Panc1 (cell line): ENCODE measurements at regions of chr5 and their contacts with region 1.

Region 1: GRCh38 chr5:142548739-142549275 is 137.1 kb downstream of the FGF1 start:
- DNase-seq: peak; percentile 97
- ATAC-seq: peak; percentile 99
- H3K4me3 ChIP-seq: no peak overlapping the region
- H3K27ac ChIP-seq: peak overlapping the region; percentile 60
- H3K4me1 ChIP-seq: peaks cover 5% of the 10 kb centered on the region
- H3K27me3 ChIP-seq: no peaks in the 10 kb centered on the region
- CTCF ChIP-seq: peak; percentile 97

Region 2: GRCh38 chr5:142128675-142129208 is 420.1 kb before region 1 on chr5:
- CTCF ChIA-PET with region 1: no interaction called
- POLR2A ChIA-PET with region 1: no interaction called
- in situ Hi-C with region 1: no loop called
- intact Hi-C with region 1: no loop called
- DNase-seq: no peak
- ATAC-seq: no peak
- H3K4me3 ChIP-seq: no peak overlapping the region
- H3K27ac ChIP-seq: no peak overlapping the region
- H3K4me1 ChIP-seq: no peaks in the 10 kb centered on the region
- H3K27me3 ChIP-seq: no peaks in the 10 kb centered on the region
- CTCF ChIP-seq: no peak

Region 3: GRCh38 chr5:142151436-142152383 is 397.1 kb before region 1 on chr5:
- CTCF ChIA-PET with region 1: interaction called, 4 read pairs
- POLR2A ChIA-PET with region 1: interaction called, 3 read pairs
- in situ Hi-C with region 1: no loop called
- intact Hi-C with region 1: loop called (anchors 1 kb)
- DNase-seq: peak; percentile 53
- ATAC-seq: peak; percentile 80
- H3K4me3 ChIP-seq: no peak overlapping the region
- H3K27ac ChIP-seq: no peak overlapping the region
- H3K4me1 ChIP-seq: no peaks in the 10 kb centered on the region; the same call in 1 of the 2 replicates
- H3K27me3 ChIP-seq: no peaks in the 10 kb centered on the region
- CTCF ChIP-seq: peak; percentile 82; the same call in 1 of the 2 replicates

Region 4: GRCh38 chr5:142175039-142175438 is 373.8 kb before region 1 on chr5:
- CTCF ChIA-PET with region 1: interaction called, 4 read pairs
- POLR2A ChIA-PET with region 1: no interaction called
- in situ Hi-C with region 1: no loop called
- intact Hi-C with region 1: loop called (anchors 5 kb)
- DNase-seq: no peak
- ATAC-seq: no peak
- H3K4me3 ChIP-seq: no peak overlapping the region
- H3K27ac ChIP-seq: peak overlapping the region; percentile 10; the same call in 1 of the 2 replicates
- H3K4me1 ChIP-seq: no peaks in the 10 kb centered on the region
- H3K27me3 ChIP-seq: no peaks in the 10 kb centered on the region
- CTCF ChIP-seq: no peak

Region 5: GRCh38 chr5:142290577-142291299 is 258.1 kb before region 1 on chr5:
- CTCF ChIA-PET with region 1: interaction called, 3 read pairs
- POLR2A ChIA-PET with region 1: interaction called, 10 read pairs
- in situ Hi-C with region 1: no loop called
- intact Hi-C with region 1: no loop called
- DNase-seq: no peak
- ATAC-seq: peak; percentile 43; the same call in 1 of the 2 replicates
- H3K4me3 ChIP-seq: no peak overlapping the region
- H3K27ac ChIP-seq: no peak overlapping the region
- H3K4me1 ChIP-seq: peaks cover 29% of the 10 kb centered on the region
- H3K27me3 ChIP-seq: no peaks in the 10 kb centered on the region
- CTCF ChIP-seq: no peak

Region 6: GRCh38 chr5:142316051-142316450 is 232.8 kb before region 1 on chr5:
- CTCF ChIA-PET with region 1: no interaction called
- POLR2A ChIA-PET with region 1: interaction called, 3 read pairs
- in situ Hi-C with region 1: no loop called
- intact Hi-C with region 1: loop called (anchors 2 kb)
- DNase-seq: no peak
- ATAC-seq: no peak
- H3K4me3 ChIP-seq: no peak overlapping the region
- H3K27ac ChIP-seq: peak overlapping the region; percentile 45; the same call in 1 of the 2 replicates
- H3K4me1 ChIP-seq: peaks cover 64% of the 10 kb centered on the region
- H3K27me3 ChIP-seq: no peaks in the 10 kb centered on the region
- CTCF ChIP-seq: no peak

Region 7: DNA sequence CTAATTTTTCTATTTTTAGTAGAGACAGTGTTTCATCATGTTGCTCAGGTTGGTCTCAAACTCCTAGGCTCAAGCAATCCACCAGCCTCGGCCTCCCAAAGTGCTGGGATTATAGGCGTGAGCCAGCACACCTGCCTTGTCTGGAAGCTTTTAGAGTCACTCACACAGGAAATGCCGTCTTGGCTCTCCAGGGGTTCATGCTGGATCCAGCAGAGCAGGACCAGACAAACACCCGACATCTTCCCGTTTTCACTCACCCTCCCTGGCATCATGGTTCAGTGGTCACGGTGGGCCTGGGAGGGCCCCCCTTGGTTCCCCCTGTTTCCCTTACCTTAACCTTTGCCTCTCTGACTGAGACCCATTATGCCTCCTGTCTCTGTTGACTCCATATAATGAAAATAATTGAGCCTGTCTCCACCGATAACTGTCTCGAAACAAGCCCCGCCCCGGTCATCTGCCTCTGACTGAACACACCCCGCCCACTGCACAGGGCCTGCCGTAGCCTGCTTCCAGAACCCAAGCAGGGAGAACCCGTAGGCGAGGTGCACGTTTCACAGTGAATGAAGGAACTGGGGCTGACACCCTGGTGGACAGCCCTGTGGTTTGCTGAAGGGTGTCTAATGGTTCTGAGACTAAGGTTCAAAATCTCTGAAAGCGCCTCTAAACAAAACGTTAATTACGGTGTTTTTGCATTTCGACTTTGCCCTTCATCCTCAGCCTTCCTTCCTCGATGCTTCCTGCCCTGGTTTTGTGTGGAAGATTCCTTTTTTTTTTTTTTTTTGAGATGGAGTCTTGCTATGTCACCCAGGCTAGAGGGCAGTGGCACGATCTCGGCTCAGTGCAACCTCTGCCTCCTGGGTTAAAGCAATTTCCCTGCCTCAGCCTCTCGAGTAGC is 184.3 kb before region 1 on chr5:
- CTCF ChIA-PET with region 1: no interaction called
- POLR2A ChIA-PET with region 1: no interaction called
- in situ Hi-C with region 1: loop called (anchors 5 kb)
- intact Hi-C with region 1: loop called (anchors 5 kb)
- DNase-seq: peak; percentile 73
- ATAC-seq: peak; percentile 78
- H3K4me3 ChIP-seq: peak overlapping the region; percentile 31 to 69
- H3K27ac ChIP-seq: peak overlapping the region; percentile 99
- H3K4me1 ChIP-seq: peaks cover 66% of the 10 kb centered on the region
- H3K27me3 ChIP-seq: no peaks in the 10 kb centered on the region
- CTCF ChIP-seq: no peak